ENCODE measurements at regions of chr1 and their contacts with region 1.

Region 1: DNA sequence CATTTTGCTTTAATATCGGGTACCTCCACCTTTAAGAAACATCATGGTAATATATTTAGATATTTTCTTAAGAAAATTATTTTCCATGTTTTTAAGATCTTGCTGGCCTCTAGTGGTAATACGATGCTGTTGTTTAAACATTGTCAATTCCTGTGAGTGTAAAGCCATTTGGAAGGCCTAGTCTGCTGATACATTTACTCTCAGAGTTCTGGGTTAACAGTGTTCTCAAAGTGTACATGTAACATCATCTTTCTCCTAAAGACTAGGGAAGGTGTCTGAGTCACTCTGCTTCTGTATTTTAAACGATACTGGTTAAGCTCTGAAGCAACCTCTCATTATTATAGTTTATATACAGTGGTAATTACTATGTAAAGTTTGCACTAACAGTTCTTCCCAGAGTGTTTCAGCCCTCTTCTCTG is 189.1 kb downstream of the RASAL2 start:
- DNase-seq: no peak
- ATAC-seq: peak; percentile 80
- H3K4me3 ChIP-seq: no peak overlapping the region
- H3K27ac ChIP-seq: peak overlapping the region; percentile 53; the same call in 1 of the 2 replicates
- H3K4me1 ChIP-seq: peaks cover 17% of the 10 kb centered on the region
- H3K27me3 ChIP-seq: no peaks in the 10 kb centered on the region
- CTCF ChIP-seq: peak; percentile 65; the same call in 1 of the 2 replicates

Region 2: GRCh38 chr1:177959811-177960515 is 323.0 kb before region 1 on chr1:
- CTCF ChIA-PET with region 1: no interaction called
- POLR2A ChIA-PET with region 1: no interaction called
- in situ Hi-C with region 1: no loop called
- intact Hi-C with region 1: loop called (anchors 10 kb)
- DNase-seq: no peak
- ATAC-seq: peak; percentile 94
- H3K4me3 ChIP-seq: no peak overlapping the region
- H3K27ac ChIP-seq: no peak overlapping the region
- H3K4me1 ChIP-seq: no peaks in the 10 kb centered on the region
- H3K27me3 ChIP-seq: no peaks in the 10 kb centered on the region
- CTCF ChIP-seq: peak; percentile 75

Region 3: GRCh38 chr1:178055779-178056471 is 227.0 kb before region 1 on chr1:
- CTCF ChIA-PET with region 1: no interaction called
- POLR2A ChIA-PET with region 1: no interaction called
- in situ Hi-C with region 1: no loop called
- intact Hi-C with region 1: loop called (anchors 10 kb)
- DNase-seq: peak; percentile 54
- ATAC-seq: peak; percentile 96
- H3K4me3 ChIP-seq: peak overlapping the region; percentile 21 to 27
- H3K27ac ChIP-seq: peak overlapping the region; percentile 89
- H3K4me1 ChIP-seq: peaks cover 33% of the 10 kb centered on the region
- H3K27me3 ChIP-seq: no peaks in the 10 kb centered on the region
- CTCF ChIP-seq: peak; percentile 33; the same call in 1 of the 2 replicates

Region 4: DNA sequence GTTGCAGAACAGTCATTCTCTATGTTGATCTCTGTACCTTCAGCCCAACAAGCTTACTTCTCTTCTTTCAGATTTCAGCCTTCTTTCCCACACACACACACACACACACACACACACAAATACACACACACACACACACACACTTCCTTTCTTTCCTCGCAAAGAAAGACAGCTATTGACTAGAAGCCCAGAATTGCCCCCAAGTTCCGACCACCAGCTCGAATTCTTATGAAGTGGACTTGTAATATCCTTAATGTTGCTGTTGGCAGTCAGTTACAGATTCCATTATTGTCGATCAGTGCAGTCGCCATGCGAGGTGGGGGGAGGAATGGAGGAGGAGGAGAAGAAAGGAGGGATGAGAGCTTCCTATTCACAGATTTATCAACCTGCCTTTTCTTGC is 88.3 kb after region 1 on chr1:
- CTCF ChIA-PET with region 1: no interaction called
- POLR2A ChIA-PET with region 1: no interaction called
- in situ Hi-C with region 1: no loop called
- intact Hi-C with region 1: no loop called
- DNase-seq: no peak
- ATAC-seq: peak; percentile 72; the same call in 1 of the 2 replicates
- H3K4me3 ChIP-seq: peak overlapping the region; percentile 0 to 21; a peak in 3 of 4 replicates
- H3K27ac ChIP-seq: no peak overlapping the region; the same call in 1 of the 2 replicates
- H3K4me1 ChIP-seq: no peaks in the 10 kb centered on the region; the same call in 1 of the 2 replicates
- H3K27me3 ChIP-seq: no peaks in the 10 kb centered on the region
- CTCF ChIP-seq: no peak

Region 5: DNA sequence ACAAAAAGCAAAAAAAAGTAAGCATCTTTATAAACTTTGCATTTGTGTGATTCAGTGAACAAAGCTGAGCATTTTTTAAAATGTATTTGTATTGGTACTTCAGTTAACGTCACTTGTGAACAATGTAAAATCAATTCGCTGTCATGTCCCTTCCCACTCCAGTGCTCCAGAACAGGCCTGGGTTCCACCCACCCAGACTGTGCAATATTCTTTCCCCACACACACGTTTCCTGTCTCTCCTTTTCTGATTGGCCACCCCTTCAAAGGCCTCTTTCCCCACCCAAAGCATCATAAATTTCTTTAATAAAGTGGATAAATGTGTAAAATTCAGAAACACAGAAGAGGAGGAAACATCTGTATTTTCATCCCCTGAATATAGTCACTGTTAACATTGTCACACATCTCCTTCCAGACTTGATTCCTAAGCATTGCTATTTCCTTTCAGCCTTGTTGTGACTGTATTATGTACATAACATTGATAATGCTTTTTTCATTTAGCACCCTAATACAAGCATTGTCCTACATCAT is 201.8 kb after region 1 on chr1:
- CTCF ChIA-PET with region 1: no interaction called
- POLR2A ChIA-PET with region 1: interaction called, 10 read pairs
- in situ Hi-C with region 1: no loop called
- intact Hi-C with region 1: no loop called
- DNase-seq: no peak
- ATAC-seq: no peak
- H3K4me3 ChIP-seq: no peak overlapping the region
- H3K27ac ChIP-seq: no peak overlapping the region
- H3K4me1 ChIP-seq: no peaks in the 10 kb centered on the region
- H3K27me3 ChIP-seq: no peaks in the 10 kb centered on the region
- CTCF ChIP-seq: no peak